ENCODE measurements at regions of chr19 and their contacts with region 1.

Region 1: GRCh38 chr19:2221918-2222317 is 14.2 kb downstream of the PLEKHJ1 start:
- DNase-seq: no peak
- H3K4me3 ChIP-seq: no peak overlapping the region
- H3K27ac ChIP-seq: no peak overlapping the region
- H3K4me1 ChIP-seq: no peaks in the 10 kb centered on the region
- H3K27me3 ChIP-seq: no peaks in the 10 kb centered on the region
- CTCF ChIP-seq: peak in 1 of 6 experiments; percentile 6
- POLR2A ChIP-seq: no peak

Region 2: DNA sequence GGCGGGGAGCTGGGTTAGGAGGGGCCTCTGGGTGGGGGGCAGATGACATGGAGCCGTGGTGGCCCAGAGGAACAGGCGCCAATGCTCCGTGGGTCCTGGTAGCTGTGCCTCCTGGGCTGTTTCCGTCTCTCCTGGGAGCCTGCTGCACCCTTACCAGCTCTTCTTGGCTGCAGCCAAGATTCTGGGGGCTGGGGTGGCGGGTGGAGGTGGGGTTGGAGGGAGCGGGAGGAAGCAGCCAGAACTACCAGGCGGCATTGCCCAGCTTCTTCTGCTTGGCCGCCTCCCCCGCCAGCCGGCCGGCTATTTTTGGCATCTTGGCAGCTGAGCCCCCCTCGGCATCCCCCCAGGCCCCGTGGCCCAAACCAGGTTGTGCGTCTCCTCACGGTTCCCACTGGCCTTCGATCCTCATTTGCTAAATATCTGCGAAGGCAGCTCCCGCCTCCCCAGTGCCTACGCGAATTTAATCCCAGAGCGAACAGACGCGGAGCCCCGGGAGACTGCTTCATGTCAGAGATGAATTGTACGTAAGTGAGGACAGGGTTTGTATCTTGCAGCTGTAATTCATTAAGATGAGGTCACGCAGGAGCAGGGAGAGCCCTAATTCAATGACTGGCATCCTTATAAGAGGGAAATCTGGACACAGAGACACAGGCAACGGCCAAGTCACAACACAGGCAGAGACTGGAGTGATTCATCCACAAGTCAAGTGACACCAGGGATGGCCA is 72.9 kb after region 1 on chr19:
- intact Hi-C with region 1: no loop called
- DNase-seq: no peak
- H3K4me3 ChIP-seq: no peak overlapping the region
- H3K27ac ChIP-seq: no peak overlapping the region
- H3K4me1 ChIP-seq: peaks cover 5 to 22% of the 10 kb centered on the region in 2 donors
- H3K27me3 ChIP-seq: peaks cover 18% of the 10 kb centered on the region
- CTCF ChIP-seq: no peak
- POLR2A ChIP-seq: no peak

Region 3: GRCh38 chr19:2385053-2385721 is 163.3 kb after region 1 on chr19:
- intact Hi-C with region 1: loop called (anchors 10 kb)
- DNase-seq: no peak
- H3K4me3 ChIP-seq: no peak overlapping the region
- H3K27ac ChIP-seq: no peak overlapping the region
- H3K4me1 ChIP-seq: no peaks in the 10 kb centered on the region
- H3K27me3 ChIP-seq: no peaks in the 10 kb centered on the region
- CTCF ChIP-seq: no peak
- POLR2A ChIP-seq: no peak

Measured in thyroid gland (tissue), 4 donors.